ENCODE measurements at regions of chr2 and their contacts with region 1.

Region 1: DNA sequence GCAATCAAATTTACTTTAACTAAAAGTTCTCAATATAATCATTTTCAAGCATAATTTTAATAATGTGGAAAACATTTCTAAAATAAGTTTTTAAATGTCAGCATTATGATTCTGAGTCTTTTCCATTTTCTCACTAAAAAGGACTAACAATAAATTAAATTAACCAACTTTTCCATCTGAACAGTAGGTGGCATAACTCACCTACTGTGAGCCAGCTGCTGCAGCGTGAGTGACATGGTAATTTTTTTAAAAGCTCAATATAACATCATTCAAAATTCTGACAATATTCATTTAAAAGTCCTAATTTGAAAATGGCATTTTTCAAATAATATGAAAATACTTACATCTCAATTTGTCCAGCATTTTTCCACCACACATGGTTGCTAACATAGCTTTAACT is 66.5 kb downstream of the DTNB start:
- DNase-seq: peak in 4 of 5 donors; percentile 19 to 39 (median 32)
- H3K4me3 ChIP-seq: no peak overlapping the region
- H3K4me3 Mint-ChIP-seq: no peak overlapping the region
- H3K27ac ChIP-seq: no peak overlapping the region
- H3K27ac Mint-ChIP-seq: no peak overlapping the region
- H3K4me1 ChIP-seq: no peaks in the 10 kb centered on the region
- H3K4me1 Mint-ChIP-seq: peaks cover 1 to 4% (median 4%) of the 10 kb centered on the region in 4 donors
- H3K27me3 ChIP-seq: no peaks in the 10 kb centered on the region
- H3K27me3 Mint-ChIP-seq: no peaks in the 10 kb centered on the region

Region 2: DNA sequence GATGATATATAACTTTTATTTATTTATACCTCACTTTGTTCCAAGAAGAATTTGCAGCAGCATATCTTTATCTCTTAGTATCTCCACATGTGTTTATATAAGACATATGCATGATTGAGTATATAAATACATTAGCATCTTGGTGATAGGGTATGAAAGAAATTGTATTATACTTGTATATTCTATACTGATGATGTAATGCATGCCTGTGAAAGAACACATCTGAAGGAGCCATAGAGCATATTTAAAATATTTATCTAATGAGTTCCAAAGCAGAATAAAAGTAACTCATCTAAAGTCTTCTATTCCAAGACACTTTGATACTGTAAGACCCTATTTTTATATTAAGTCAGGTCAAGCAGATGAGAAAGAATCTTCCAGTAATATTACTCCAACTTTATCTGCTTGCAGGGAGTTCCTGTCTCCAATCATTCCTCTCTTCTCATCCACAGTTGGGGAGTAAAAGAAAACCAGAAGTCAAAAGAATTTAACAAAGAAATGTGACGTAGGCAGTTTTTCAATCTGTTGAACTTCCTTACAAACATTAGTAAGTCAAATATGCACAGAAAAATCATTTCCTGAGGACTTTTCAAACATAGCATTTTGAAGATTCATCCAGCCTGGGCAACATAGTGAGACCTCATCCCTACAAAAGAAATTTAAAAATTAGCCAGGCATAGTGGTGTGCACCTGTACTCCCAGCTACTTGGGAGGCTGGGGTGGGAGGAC is 10.2 kb before region 1 on chr2:
- CTCF ChIA-PET with region 1: interaction called, 14 read pairs
- POLR2A ChIA-PET with region 1: interaction called, 5 read pairs
- intact Hi-C with region 1: no loop called
- DNase-seq: no peak
- H3K4me3 ChIP-seq: no peak overlapping the region
- H3K4me3 Mint-ChIP-seq: no peak overlapping the region
- H3K27ac ChIP-seq: no peak overlapping the region
- H3K27ac Mint-ChIP-seq: peak overlapping the region in 1 of 7 donors; percentile 9
- H3K4me1 ChIP-seq: peaks cover 12% of the 10 kb centered on the region
- H3K4me1 Mint-ChIP-seq: peaks cover 8 to 12% (median 11%) of the 10 kb centered on the region in 4 donors
- H3K27me3 ChIP-seq: no peaks in the 10 kb centered on the region
- H3K27me3 Mint-ChIP-seq: no peaks in the 10 kb centered on the region

Region 3: GRCh38 chr2:25632396-25632795 is 25.5 kb after region 1 on chr2:
- CTCF ChIA-PET with region 1: interaction called, 11 read pairs
- POLR2A ChIA-PET with region 1: no interaction called
- intact Hi-C with region 1: no loop called
- DNase-seq: no peak
- H3K4me3 ChIP-seq: no peak overlapping the region
- H3K4me3 Mint-ChIP-seq: no peak overlapping the region
- H3K27ac ChIP-seq: no peak overlapping the region
- H3K27ac Mint-ChIP-seq: peak overlapping the region in 2 of 7 donors; percentile 2 to 41
- H3K4me1 ChIP-seq: no peaks in the 10 kb centered on the region
- H3K4me1 Mint-ChIP-seq: no peaks in the 10 kb centered on the region
- H3K27me3 ChIP-seq: no peaks in the 10 kb centered on the region
- H3K27me3 Mint-ChIP-seq: no peaks in the 10 kb centered on the region

Region 4: GRCh38 chr2:25664183-25664964 is 57.5 kb after region 1 on chr2:
- CTCF ChIA-PET with region 1: interaction called, 6 read pairs
- POLR2A ChIA-PET with region 1: no interaction called
- intact Hi-C with region 1: loop called (anchors 2 kb)
- DNase-seq: no peak
- H3K4me3 ChIP-seq: no peak overlapping the region
- H3K4me3 Mint-ChIP-seq: peak overlapping the region in 2 of 8 donors; percentile 50 to 66
- H3K27ac ChIP-seq: no peak overlapping the region
- H3K27ac Mint-ChIP-seq: peak overlapping the region in 1 of 7 donors; percentile 32
- H3K4me1 ChIP-seq: no peaks in the 10 kb centered on the region
- H3K4me1 Mint-ChIP-seq: peaks cover 9 to 39% (median 18%) of the 10 kb centered on the region in 4 donors
- H3K27me3 ChIP-seq: no peaks in the 10 kb centered on the region
- H3K27me3 Mint-ChIP-seq: no peaks in the 10 kb centered on the region

Region 5: DNA sequence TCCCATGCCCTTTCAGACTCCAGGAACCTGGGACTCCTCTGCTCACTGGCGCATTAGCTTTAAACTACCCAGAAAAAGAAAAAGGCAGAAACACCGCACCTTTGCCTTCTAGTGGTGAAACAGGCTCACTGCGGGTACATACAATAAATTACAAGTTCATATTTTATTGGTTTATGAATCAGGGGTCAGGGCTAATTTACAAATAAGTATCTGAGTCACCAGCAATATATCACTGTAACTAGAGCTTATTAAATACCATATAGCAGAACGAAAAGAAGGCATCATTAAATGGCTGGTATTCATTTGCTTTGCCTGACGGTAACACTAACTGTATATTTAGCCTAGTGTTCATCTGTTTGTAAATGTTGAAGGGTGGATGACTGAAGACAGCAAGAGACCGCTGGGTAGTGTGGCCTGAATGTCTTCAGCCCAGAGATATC is 93.3 kb after region 1 on chr2:
- CTCF ChIA-PET with region 1: interaction called, 160 read pairs
- POLR2A ChIA-PET with region 1: no interaction called
- intact Hi-C with region 1: loop called (anchors 1 kb)
- DNase-seq: peak in 4 of 5 donors; percentile 20 to 42 (median 27)
- H3K4me3 ChIP-seq: no peak overlapping the region
- H3K4me3 Mint-ChIP-seq: no peak overlapping the region
- H3K27ac ChIP-seq: no peak overlapping the region
- H3K27ac Mint-ChIP-seq: no peak overlapping the region
- H3K4me1 ChIP-seq: no peaks in the 10 kb centered on the region
- H3K4me1 Mint-ChIP-seq: peaks cover 0 to 3% (median 0%) of the 10 kb centered on the region in 4 donors
- H3K27me3 ChIP-seq: no peaks in the 10 kb centered on the region
- H3K27me3 Mint-ChIP-seq: no peaks in the 10 kb centered on the region

Region 6: DNA sequence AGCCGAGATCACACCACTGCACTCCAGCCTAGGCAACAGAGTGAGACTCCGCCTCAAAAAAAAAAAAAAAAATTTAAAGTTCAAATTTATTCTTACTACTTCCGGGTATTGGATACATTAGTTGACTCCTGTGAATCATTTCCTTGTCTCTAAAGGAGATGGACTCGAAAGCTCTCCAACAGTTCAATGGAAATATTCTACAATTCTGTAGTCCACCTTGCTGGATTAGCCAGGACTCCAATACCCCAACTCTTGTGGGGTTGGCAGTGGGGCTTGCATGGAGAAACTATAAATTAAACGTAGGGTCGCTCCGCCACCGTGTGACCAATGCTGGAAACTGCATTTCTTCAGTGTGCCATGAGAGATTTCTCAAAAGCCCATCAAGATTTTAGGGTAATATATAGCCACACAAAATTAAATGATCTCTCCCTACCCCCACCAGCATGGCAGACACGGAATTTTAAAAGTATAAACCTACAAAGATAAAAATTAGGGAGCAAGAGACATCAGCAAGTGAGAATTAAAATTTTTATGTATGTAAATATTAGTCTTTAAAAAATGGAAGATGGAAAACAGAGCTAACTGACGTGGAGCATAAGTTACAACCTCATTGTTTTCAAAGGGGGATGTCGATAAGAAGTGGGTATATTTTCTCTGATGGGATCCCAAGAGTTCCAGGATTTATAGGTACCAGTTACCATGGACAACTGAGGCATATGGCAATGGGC is 538.2 kb after region 1 on chr2:
- CTCF ChIA-PET with region 1: no interaction called
- POLR2A ChIA-PET with region 1: no interaction called
- intact Hi-C with region 1: loop called (anchors 2 kb)
- DNase-seq: peak; percentile 47 to 58 (median 49)
- H3K4me3 ChIP-seq: no peak overlapping the region
- H3K4me3 Mint-ChIP-seq: no peak overlapping the region
- H3K27ac ChIP-seq: no peak overlapping the region
- H3K27ac Mint-ChIP-seq: no peak overlapping the region
- H3K4me1 ChIP-seq: no peaks in the 10 kb centered on the region
- H3K4me1 Mint-ChIP-seq: peaks cover 0 to 4% (median 2%) of the 10 kb centered on the region in 4 donors
- H3K27me3 ChIP-seq: peaks cover 6% of the 10 kb centered on the region
- H3K27me3 Mint-ChIP-seq: peaks cover 9 to 10% of the 10 kb centered on the region in 2 donors

Region 7: DNA sequence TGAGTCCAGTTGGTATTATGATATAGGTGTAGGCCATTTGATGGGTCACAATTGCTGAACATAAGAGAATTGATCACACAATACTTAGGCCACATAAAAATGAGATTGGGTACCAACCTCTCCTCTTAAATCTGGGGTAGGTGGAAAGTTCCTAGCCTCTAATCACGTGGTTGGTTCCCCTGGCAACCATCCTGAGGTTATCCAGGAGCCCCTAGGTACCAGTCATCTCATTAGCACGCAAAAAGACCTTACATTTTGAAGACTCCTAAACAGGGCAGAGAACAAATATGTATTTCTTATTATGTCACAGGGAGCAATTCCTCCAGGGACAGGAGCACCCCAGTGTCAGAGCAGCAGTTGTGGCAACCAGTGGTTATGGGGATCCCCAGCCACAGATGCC is 726.4 kb after region 1 on chr2:
- CTCF ChIA-PET with region 1: no interaction called
- POLR2A ChIA-PET with region 1: no interaction called
- intact Hi-C with region 1: no loop called
- DNase-seq: no peak
- H3K4me3 ChIP-seq: no peak overlapping the region
- H3K4me3 Mint-ChIP-seq: no peak overlapping the region
- H3K27ac ChIP-seq: no peak overlapping the region
- H3K27ac Mint-ChIP-seq: no peak overlapping the region
- H3K4me1 ChIP-seq: peaks cover 8% of the 10 kb centered on the region
- H3K4me1 Mint-ChIP-seq: peaks cover 7 to 10% (median 8%) of the 10 kb centered on the region in 4 donors
- H3K27me3 ChIP-seq: no peaks in the 10 kb centered on the region
- H3K27me3 Mint-ChIP-seq: no peaks in the 10 kb centered on the region

Measured in CD4-positive, alpha-beta memory T cell (primary cell).